Panc1 (cell line): ENCODE measurements at regions of chr19 and their contacts with region 1.

Region 1: DNA sequence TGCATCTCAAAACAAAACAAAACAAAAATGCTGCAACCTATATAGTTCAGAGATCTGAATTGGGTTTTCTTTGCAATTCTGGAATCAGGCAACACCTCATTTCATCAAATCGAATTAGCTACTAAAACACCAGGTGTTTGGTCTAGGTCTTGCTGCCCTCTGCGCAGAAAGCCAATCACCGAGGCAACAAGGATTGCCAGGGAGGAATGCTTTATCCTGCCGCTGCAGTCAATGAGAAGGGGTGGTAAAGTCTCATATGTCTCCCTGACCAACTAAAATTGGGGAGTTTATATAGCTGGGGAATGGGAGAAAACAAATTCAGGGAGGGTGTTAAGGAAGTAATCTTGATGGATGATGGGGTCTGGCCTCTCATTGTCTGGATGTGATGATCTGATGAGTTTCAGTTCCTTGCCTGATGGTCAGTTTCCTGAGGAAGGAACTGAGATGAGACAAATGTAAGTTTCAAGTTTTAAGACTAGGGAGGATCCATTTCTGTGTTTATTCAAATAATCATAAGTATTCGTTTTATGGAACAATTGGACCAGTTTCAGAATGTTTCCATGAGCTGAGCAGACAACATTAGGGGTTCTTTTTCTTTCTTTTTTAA is 5.0 kb upstream of the YJU2 start:
- DNase-seq: no peak
- ATAC-seq: no peak
- H3K4me3 ChIP-seq: no peak overlapping the region
- H3K27ac ChIP-seq: no peak overlapping the region
- H3K4me1 ChIP-seq: peaks cover 4% of the 10 kb centered on the region; the same call in 1 of the 2 replicates
- H3K27me3 ChIP-seq: no peaks in the 10 kb centered on the region
- CTCF ChIP-seq: no peak

Region 2: GRCh38 chr19:4229179-4229931 is 12.6 kb before region 1 on chr19 and contains the start of gene EBI3:
- CTCF ChIA-PET with region 1: no interaction called
- POLR2A ChIA-PET with region 1: no interaction called
- in situ Hi-C with region 1: no loop called
- intact Hi-C with region 1: no loop called
- DNase-seq: no peak
- ATAC-seq: peak; percentile 75
- H3K4me3 ChIP-seq: peak within 1 kb of the TSS in 1 of 2 experiments; percentile 20; a peak in 1 of 4 replicates
- H3K27ac ChIP-seq: 0 out of 2 replicates have a peak within 1 kb of the TSS, but pooled peaks have one; percentile 12
- H3K4me1 ChIP-seq: no peaks in the 10 kb centered on the region; the same call in 1 of the 2 replicates
- H3K27me3 ChIP-seq: no peaks in the 10 kb centered on the region; the same call in 1 of the 2 replicates
- CTCF ChIP-seq: no peak
- total RNA-seq, gene EBI3: 3.0 TPM

Region 3: DNA sequence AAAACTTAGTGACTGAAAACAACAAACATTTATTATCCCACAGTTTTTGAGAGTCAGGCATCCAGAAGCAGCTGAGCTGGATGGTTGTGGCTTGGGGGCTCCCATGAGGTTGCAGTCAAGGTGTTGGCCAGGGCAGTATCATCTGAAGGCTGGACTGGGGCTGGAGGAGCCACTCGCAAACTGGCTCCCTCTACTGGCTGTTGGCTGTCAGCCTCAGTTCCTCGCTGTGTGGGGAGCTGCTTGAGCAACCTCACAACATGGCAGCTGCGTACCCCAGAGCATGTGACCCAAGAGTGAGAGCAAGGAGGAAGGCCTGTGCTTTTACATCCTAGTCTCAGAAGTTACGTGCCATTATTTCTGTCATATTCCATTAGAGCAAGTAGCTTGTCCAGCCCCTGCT is 14.6 kb after region 1 on chr19:
- CTCF ChIA-PET with region 1: no interaction called
- POLR2A ChIA-PET with region 1: interaction called, 10 read pairs
- in situ Hi-C with region 1: no loop called
- intact Hi-C with region 1: no loop called
- DNase-seq: no peak
- ATAC-seq: no peak; the same call in 1 of the 2 replicates
- H3K4me3 ChIP-seq: no peak overlapping the region
- H3K27ac ChIP-seq: no peak overlapping the region
- H3K4me1 ChIP-seq: no peaks in the 10 kb centered on the region
- H3K27me3 ChIP-seq: no peaks in the 10 kb centered on the region
- CTCF ChIP-seq: no peak